PC-3 (cell line): ENCODE measurements at regions of chr2 and their contacts with region 1.

Region 1: DNA sequence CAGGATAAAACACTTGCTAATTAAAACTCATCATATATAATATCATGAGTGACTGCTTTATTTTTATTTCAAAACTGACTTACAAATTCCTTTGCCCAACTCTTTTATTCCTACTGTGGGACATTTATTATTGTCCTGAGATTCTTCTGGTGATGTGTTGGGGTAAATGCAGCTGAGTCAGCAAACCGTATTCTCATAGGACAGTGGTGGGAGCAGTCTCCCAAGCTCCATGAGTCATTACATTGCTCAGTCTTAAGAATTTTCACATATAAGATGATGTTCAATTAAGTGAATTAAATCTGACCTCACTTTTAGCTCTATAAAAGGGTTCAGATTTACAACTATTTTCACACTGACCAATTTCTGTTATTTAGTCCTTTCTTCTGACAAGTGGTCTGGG is 1530.7 kb downstream of the LRP1B start:
- DNase-seq: peak; percentile 71
- ATAC-seq: peak; percentile 68
- H3K4me3 ChIP-seq: no peak overlapping the region
- H3K27ac ChIP-seq: no peak overlapping the region
- H3K4me1 ChIP-seq: peaks cover 30% of the 10 kb centered on the region
- H3K27me3 ChIP-seq: no peaks in the 10 kb centered on the region
- CTCF ChIP-seq: no peak

Region 2: GRCh38 chr2:139813340-139813739 is 786.8 kb before region 1 on chr2:
- CTCF ChIA-PET with region 1: no interaction called
- POLR2A ChIA-PET with region 1: no interaction called
- intact Hi-C with region 1: no loop called
- DNase-seq: no peak
- ATAC-seq: no peak
- H3K4me3 ChIP-seq: no peak overlapping the region
- H3K27ac ChIP-seq: no peak overlapping the region
- H3K4me1 ChIP-seq: no peaks in the 10 kb centered on the region
- H3K27me3 ChIP-seq: no peaks in the 10 kb centered on the region
- CTCF ChIP-seq: no peak

Region 3: DNA sequence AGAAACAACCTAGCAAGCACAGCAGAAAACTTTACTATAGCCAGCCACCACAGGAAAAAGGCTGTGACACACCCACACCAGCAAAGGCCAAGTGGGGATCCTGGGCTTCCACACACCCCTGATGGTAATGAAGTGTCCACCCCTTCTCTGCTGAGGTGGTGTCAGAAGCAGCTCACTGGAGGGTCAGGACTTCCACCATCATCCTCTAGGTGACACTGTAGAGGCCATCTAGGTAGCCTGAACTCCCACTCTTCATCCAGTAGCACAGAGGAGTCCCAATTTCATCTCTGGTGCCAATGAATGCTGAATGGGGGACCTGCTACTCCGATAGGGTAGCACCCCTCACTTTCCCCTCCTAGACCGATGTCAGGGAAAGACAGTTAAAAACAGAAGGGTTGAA is 13.7 kb before region 1 on chr2:
- CTCF ChIA-PET with region 1: no interaction called
- POLR2A ChIA-PET with region 1: no interaction called
- intact Hi-C with region 1: no loop called
- DNase-seq: peak; percentile 73
- ATAC-seq: peak; percentile 88
- H3K4me3 ChIP-seq: no peak overlapping the region
- H3K27ac ChIP-seq: no peak overlapping the region
- H3K4me1 ChIP-seq: peaks cover 11% of the 10 kb centered on the region; the same call in 1 of the 2 replicates
- H3K27me3 ChIP-seq: no peaks in the 10 kb centered on the region
- CTCF ChIP-seq: peak; percentile 82

Region 4: DNA sequence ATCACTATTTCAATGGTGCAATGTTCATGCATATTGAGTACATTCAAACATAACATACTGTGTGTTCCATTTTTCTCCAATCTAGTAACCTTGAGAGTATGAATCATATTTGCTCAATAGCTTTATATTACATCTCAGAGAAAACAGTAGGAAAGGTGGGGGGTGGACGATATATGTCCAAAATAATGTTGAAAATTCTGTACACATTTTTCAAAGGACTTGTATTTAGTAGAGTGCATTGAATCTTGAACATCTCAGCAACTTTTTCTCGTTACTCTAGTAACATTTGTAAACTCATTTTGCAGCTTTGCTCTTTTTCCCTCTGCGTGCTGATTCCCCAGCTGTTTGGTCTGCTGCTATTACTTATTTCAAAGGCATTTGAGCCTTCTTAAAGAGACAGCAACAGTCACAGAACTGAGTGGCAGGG is 43.7 kb after region 1 on chr2:
- CTCF ChIA-PET with region 1: no interaction called
- POLR2A ChIA-PET with region 1: interaction called, 50 read pairs
- intact Hi-C with region 1: no loop called
- DNase-seq: peak; percentile 71
- ATAC-seq: peak; percentile 97
- H3K4me3 ChIP-seq: peak overlapping the region; percentile 53
- H3K27ac ChIP-seq: peak overlapping the region; percentile 73
- H3K4me1 ChIP-seq: peaks cover 19% of the 10 kb centered on the region
- H3K27me3 ChIP-seq: no peaks in the 10 kb centered on the region
- CTCF ChIP-seq: no peak